Body of pancreas (tissue), 4 donors: ENCODE measurements at regions of chr10 and their contacts with region 1.

Region 1: DNA sequence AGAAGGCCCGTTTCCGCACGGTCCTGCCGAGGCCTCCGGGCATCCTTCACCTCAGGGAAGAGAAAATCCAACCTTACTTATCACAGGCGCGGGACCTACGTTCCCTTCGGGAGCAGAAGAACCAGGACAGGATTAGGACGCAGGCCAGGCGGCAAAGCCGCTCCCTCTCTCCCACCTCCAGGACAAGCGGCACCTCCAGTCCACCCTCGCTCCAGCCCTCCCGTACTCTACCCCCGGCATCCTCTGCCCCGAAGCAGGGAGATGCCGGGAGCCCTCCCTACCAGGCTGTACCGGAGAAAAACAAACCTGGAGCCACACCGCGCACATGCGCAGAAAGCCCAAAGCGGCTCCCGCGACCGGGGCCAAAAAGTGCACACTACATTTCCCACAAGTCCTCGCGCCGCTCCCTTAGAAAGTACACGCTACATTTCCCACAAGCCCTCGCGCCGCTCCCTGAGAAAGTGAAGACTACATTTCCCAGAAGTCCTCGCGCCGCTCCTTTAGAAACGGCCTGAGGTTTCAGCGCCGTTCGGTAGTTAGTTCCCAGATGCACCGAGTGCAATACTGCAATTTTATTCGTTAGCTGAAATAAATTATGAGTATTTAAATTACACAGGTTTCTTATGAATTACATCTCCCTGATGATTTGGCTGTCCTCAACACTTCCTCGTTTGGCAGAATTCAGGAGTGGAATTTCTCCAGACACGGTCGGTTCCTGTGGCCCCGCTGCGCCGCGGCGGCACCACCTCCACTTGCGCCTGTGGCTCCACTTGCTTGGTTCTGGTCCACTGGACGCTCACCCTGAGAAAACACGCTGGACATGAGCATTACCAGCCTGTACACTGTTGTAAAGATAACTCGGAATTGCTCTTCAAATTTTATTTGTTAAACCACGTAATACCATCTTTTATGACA is 85.6 kb downstream of the ZNF33B start:
- DNase-seq: peak; percentile 97 to 99 (median 98)
- ATAC-seq: peak; percentile 98
- H3K4me3 ChIP-seq: peak overlapping the region; percentile 32 to 71
- H3K27ac ChIP-seq: peak overlapping the region; percentile 52 to 76 (median 63)
- H3K4me1 ChIP-seq: peaks cover 21% of the 10 kb centered on the region
- H3K27me3 ChIP-seq: no peaks in the 10 kb centered on the region
- CTCF ChIP-seq: no peak
- POLR2A ChIP-seq: peak; percentile 44 to 78 (median 72)

Region 2: GRCh38 chr10:42491001-42491592 is 61.7 kb before region 1 on chr10:
- intact Hi-C with region 1: no loop called
- DNase-seq: no peak
- ATAC-seq: no peak
- H3K4me3 ChIP-seq: no peak overlapping the region
- H3K27ac ChIP-seq: no peak overlapping the region
- H3K4me1 ChIP-seq: no peaks in the 10 kb centered on the region
- H3K27me3 ChIP-seq: no peaks in the 10 kb centered on the region
- CTCF ChIP-seq: no peak
- POLR2A ChIP-seq: no peak

Region 3: DNA sequence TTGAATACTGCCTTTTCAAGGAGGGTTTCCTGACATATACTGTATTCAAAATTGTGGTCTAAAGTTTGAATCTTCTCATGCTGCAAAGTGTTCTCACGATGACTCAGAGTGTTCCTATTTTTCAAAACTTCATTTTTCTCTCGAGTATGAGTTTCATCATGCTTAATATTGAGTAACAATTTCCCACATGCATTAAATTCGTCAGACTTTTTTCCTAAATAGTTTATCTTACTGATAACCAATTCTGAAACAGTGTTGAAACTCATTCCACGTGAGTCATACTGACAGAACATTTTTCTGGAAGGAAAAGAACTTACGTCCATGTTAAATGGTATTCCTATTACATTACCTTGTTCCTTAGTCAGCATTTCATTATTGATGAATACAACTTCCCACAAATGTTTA is 41.5 kb after region 1 on chr10:
- intact Hi-C with region 1: no loop called
- DNase-seq: no peak
- ATAC-seq: no peak
- H3K4me3 ChIP-seq: no peak overlapping the region
- H3K27ac ChIP-seq: no peak overlapping the region
- H3K4me1 ChIP-seq: no peaks in the 10 kb centered on the region
- H3K27me3 ChIP-seq: no peaks in the 10 kb centered on the region
- CTCF ChIP-seq: no peak
- POLR2A ChIP-seq: no peak

Region 4: GRCh38 chr10:42638055-42638820 is 85.5 kb after region 1 on chr10 and contains the start of gene ZNF33B:
- intact Hi-C with region 1: loop called (anchors 10 kb)
- DNase-seq: peak; percentile 96 to 97 (median 97)
- ATAC-seq: peak; percentile 89
- H3K4me3 ChIP-seq: peak within 1 kb of the TSS; percentile 21 to 67
- H3K27ac ChIP-seq: peak within 1 kb of the TSS; percentile 90 to 100 (median 96)
- H3K4me1 ChIP-seq: peaks cover 65% of the 10 kb centered on the region
- H3K27me3 ChIP-seq: no peaks in the 10 kb centered on the region
- CTCF ChIP-seq: no peak
- POLR2A ChIP-seq: peak; percentile 94 to 98 (median 97)
- total RNA-seq, gene ZNF33B: 27.0 to 82.5 TPM